Adrenal gland (tissue), 19 donors: ENCODE measurements at regions of chr18 and their contacts with region 1.

Region 1: GRCh38 chr18:10949655-10950054 is 199.7 kb downstream of the PIEZO2 start:
- DNase-seq: no peak
- H3K4me3 ChIP-seq: no peak overlapping the region
- H3K27ac ChIP-seq: no peak overlapping the region
- H3K4me1 ChIP-seq: no peaks in the 10 kb centered on the region
- H3K27me3 ChIP-seq: no peaks in the 10 kb centered on the region
- CTCF ChIP-seq: no peak
- POLR2A ChIP-seq: no peak

Region 2: GRCh38 chr18:11005528-11005927 is 55.9 kb after region 1 on chr18:
- intact Hi-C with region 1: loop called in 1 of 2 experiments (anchors 10 kb)
- DNase-seq: peak; percentile 56 to 86 (median 75)
- H3K4me3 ChIP-seq: no peak overlapping the region
- H3K27ac ChIP-seq: peak overlapping the region in 1 of 5 donors; percentile 56
- H3K4me1 ChIP-seq: peaks cover 0 to 6% of the 10 kb centered on the region in 2 donors
- H3K27me3 ChIP-seq: no peaks in the 10 kb centered on the region
- CTCF ChIP-seq: no peak
- POLR2A ChIP-seq: no peak

Region 3: GRCh38 chr18:11020877-11021414 is 71.3 kb after region 1 on chr18:
- intact Hi-C with region 1: no loop called
- DNase-seq: no peak
- H3K4me3 ChIP-seq: no peak overlapping the region
- H3K27ac ChIP-seq: no peak overlapping the region
- H3K4me1 ChIP-seq: no peaks in the 10 kb centered on the region
- H3K27me3 ChIP-seq: no peaks in the 10 kb centered on the region
- CTCF ChIP-seq: no peak
- POLR2A ChIP-seq: no peak